ENCODE measurements at regions of chr6 and their contacts with region 1.

Region 1: DNA sequence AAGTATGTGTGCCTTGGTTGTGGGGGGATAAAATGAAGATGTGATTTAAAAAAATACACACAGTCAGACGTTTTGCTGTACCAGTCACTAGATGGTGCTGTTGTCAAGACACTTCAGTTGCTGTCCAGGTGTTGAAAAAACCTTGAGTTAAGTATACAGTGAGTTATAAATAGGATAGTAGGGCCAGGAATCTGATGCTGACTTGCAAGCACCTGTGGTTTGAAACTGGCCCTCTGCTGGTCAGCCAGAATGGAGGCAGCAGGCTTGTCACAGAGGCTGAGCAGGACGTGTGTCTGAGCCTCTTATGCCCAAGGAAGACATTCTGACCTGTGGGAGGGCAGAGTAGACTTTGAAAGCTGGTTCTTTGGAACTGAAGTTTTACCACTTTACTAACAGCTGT is 27.8 kb downstream of the RNF8 start:
- DNase-seq: peak; percentile 88
- ATAC-seq: peak; percentile 93
- H3K4me3 ChIP-seq: no peak overlapping the region
- H3K27ac ChIP-seq: no peak overlapping the region
- H3K4me1 ChIP-seq: no peaks in the 10 kb centered on the region
- H3K27me3 ChIP-seq: no peaks in the 10 kb centered on the region
- CTCF ChIP-seq: peak; percentile 94

Region 2: GRCh38 chr6:37426945-37427510 is 45.4 kb after region 1 on chr6:
- CTCF ChIA-PET with region 1: no interaction called
- POLR2A ChIA-PET with region 1: no interaction called
- intact Hi-C with region 1: no loop called
- DNase-seq: no peak
- ATAC-seq: no peak
- H3K4me3 ChIP-seq: no peak overlapping the region
- H3K27ac ChIP-seq: no peak overlapping the region
- H3K4me1 ChIP-seq: no peaks in the 10 kb centered on the region
- H3K27me3 ChIP-seq: no peaks in the 10 kb centered on the region
- CTCF ChIP-seq: no peak

Region 3: DNA sequence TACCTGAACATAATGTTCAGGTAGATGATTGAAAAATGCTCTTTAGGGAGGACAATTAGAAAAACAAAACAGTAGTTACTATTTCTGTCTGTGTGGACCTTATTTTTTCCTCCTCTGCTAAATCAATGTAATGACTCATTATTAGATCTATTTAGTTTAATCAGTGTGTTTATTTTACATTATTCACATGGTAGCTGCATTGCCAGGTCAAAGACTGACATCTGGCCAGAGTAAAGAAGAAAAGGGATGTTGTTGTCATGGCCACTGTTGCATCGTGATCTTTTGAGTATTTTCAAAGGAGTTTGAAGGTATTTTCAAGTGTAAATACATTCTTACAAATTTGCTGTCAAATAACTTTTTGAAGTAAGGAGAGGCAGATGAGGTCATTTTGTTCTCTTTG is 57.4 kb after region 1 on chr6:
- CTCF ChIA-PET with region 1: interaction called, 3 read pairs
- POLR2A ChIA-PET with region 1: no interaction called
- intact Hi-C with region 1: loop called (anchors 2 kb)
- DNase-seq: peak; percentile 32
- ATAC-seq: peak; percentile 82
- H3K4me3 ChIP-seq: no peak overlapping the region
- H3K27ac ChIP-seq: no peak overlapping the region
- H3K4me1 ChIP-seq: peaks cover 17% of the 10 kb centered on the region
- H3K27me3 ChIP-seq: no peaks in the 10 kb centered on the region
- CTCF ChIP-seq: no peak

Region 4: GRCh38 chr6:37483917-37484785 is 102.6 kb after region 1 on chr6:
- CTCF ChIA-PET with region 1: no interaction called
- POLR2A ChIA-PET with region 1: no interaction called
- intact Hi-C with region 1: loop called (anchors 10 kb)
- DNase-seq: peak; percentile 56
- ATAC-seq: peak; percentile 73
- H3K4me3 ChIP-seq: no peak overlapping the region
- H3K27ac ChIP-seq: no peak overlapping the region
- H3K4me1 ChIP-seq: no peaks in the 10 kb centered on the region
- H3K27me3 ChIP-seq: no peaks in the 10 kb centered on the region
- CTCF ChIP-seq: peak; percentile 77

Region 5: DNA sequence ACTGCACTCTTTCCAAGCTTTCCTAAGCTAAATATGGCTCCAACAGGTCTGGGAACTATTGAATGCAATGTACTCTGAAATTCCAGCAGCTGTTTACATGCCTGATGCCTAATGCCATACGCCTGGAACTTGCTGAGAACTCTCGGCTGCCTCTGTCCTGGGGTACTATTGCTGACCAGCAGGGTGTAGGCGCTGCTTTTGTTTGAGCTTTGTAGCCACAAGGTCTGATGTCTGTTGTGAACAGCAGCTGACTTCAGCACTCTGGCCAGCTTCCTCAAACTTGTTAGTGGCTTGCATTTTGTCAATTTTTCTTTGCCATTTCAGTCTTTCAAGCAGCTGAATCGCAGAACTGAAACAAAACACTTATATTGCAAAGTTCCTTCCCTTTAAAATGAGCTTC is 1706.8 kb after region 1 on chr6:
- CTCF ChIA-PET with region 1: no interaction called
- POLR2A ChIA-PET with region 1: no interaction called
- intact Hi-C with region 1: no loop called
- DNase-seq: peak; percentile 45
- ATAC-seq: peak; percentile 58; the same call in 1 of the 2 replicates
- H3K4me3 ChIP-seq: no peak overlapping the region
- H3K27ac ChIP-seq: no peak overlapping the region
- H3K4me1 ChIP-seq: no peaks in the 10 kb centered on the region
- H3K27me3 ChIP-seq: peaks cover 92% of the 10 kb centered on the region
- CTCF ChIP-seq: peak; percentile 38

Measured in PC-3 (cell line).